IMR-90 (cell line): ENCODE measurements at regions of chr11 and their contacts with region 1.

Region 1: GRCh38 chr11:63698976-63699733 is 17.9 kb downstream of the RTN3 start:
- DNase-seq: no peak
- ATAC-seq: no peak
- H3K4me3 ChIP-seq: no peak overlapping the region
- H3K27ac ChIP-seq: no peak overlapping the region
- H3K4me1 ChIP-seq: no peaks in the 10 kb centered on the region
- H3K27me3 ChIP-seq: no peaks in the 10 kb centered on the region
- CTCF ChIP-seq: no peak
- POLR2A ChIP-seq: no peak
- RAD21 ChIP-seq: no peak

Region 2: DNA sequence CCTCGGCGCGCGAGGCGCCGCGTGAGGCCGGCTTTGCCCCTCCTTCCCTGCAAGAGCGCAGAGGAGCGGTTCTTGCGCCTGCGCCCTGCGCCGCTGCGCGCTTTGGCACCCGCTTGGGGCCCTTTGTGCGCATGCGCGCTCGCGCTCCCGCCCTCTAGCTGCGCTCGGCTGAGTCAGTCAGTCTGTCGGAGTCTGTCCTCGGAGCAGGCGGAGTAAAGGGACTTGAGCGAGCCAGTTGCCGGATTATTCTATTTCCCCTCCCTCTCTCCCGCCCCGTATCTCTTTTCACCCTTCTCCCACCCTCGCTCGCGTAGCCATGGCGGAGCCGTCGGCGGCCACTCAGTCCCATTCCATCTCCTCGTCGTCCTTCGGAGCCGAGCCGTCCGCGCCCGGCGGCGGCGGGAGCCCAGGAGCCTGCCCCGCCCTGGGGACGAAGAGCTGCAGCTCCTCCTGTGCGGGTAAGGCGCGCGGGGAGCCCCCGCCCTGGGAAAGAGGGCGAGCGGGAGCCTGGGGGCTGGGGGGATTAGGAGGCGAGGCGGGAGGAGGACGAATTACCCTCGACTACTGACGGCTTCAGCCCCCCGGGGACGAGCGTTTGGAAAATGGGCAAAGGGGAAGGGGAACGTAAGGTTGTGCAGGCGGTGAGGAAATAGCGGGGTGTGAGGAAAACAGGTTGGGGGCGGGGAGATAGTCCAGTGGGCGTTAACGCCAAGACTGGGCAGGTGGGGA is 17.7 kb before region 1 on chr11 and contains the start of gene RTN3:
- CTCF ChIA-PET with region 1: interaction called, 3 read pairs
- POLR2A ChIA-PET with region 1: no interaction called
- dilution Hi-C with region 1: no loop called
- in situ Hi-C with region 1: no loop called
- intact Hi-C with region 1: loop called (anchors 1 kb)
- DNase-seq: peak; percentile 98
- ATAC-seq: peak; percentile 97
- H3K4me3 ChIP-seq: peak within 1 kb of the TSS; percentile 87
- H3K27ac ChIP-seq: peak within 1 kb of the TSS; percentile 79
- H3K4me1 ChIP-seq: peaks cover under 1% of the 10 kb centered on the region
- H3K27me3 ChIP-seq: no peaks in the 10 kb centered on the region
- CTCF ChIP-seq: 0 out of 2 replicates have a peak, but pooled peaks have one; percentile 9
- POLR2A ChIP-seq: peak; percentile 92
- RAD21 ChIP-seq: no peak; the same call in 1 of the 2 replicates
- total RNA-seq, gene RTN3: 31.2 and 42.5 TPM in 2 replicates